Tibial artery (tissue), 4 donors: ENCODE measurements at regions of chr2 and their contacts with region 1.

Region 1: GRCh38 chr2:25521665-25522387 is 151.6 kb downstream of the DTNB start:
- DNase-seq: no peak
- H3K4me3 ChIP-seq: peak overlapping the region in 1 of 2 donors; percentile 9
- H3K27ac ChIP-seq: no peak overlapping the region
- H3K4me1 ChIP-seq: no peaks in the 10 kb centered on the region
- H3K27me3 ChIP-seq: no peaks in the 10 kb centered on the region
- CTCF ChIP-seq: peak; percentile 63 to 74

Region 2: GRCh38 chr2:25276569-25277465 is 245.0 kb before region 1 on chr2:
- intact Hi-C with region 1: loop called (anchors 10 kb)
- DNase-seq: peak; percentile 42 to 82
- H3K4me3 ChIP-seq: peak overlapping the region; percentile 49 to 53
- H3K27ac ChIP-seq: peak overlapping the region; percentile 77 to 80
- H3K4me1 ChIP-seq: peaks cover 0 to 42% (median 27%) of the 10 kb centered on the region in 4 donors
- H3K27me3 ChIP-seq: no peaks in the 10 kb centered on the region
- CTCF ChIP-seq: peak; percentile 75 to 87